Posterior vena cava (tissue), 2 donors: ENCODE measurements at regions of chr17 and their contacts with region 1.

Region 1: DNA sequence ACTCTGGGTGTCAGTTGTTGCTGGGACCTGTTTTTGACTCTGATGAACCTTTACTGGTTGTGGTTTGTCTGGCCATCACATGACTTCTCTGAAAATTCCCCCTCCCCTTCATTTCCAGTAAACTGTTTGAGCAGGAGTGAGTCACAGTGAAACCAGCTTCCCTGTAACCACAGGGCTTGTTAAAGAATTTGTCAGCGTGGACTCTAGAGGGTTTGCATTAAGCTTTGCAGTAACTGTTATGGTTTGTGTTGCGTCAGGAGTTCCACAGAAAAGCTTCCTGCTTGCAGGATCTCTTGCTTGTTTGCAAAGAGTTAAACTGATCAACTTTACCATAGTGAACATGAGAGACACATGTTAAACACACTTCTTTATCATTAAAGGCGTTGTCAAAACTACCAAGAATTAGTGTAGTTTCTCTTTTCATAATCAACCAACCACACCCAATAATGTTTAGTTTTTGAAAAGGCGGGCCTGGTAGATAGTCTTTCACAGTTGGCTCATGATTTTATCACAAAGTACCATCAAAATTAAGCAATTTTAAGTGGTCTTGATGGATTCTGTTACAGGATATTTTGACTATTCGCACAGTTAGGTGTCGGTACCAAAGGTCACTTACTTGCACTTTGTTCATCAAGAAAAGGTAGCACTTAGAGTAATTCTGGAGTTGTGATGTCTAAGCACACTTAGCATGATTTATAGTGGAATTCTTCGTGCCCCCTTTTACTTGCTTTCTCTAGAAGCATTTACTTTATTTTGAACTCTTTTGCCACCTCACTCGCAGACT is 79.3 kb downstream of the VMP1 start:
- DNase-seq: no peak

Region 2: DNA sequence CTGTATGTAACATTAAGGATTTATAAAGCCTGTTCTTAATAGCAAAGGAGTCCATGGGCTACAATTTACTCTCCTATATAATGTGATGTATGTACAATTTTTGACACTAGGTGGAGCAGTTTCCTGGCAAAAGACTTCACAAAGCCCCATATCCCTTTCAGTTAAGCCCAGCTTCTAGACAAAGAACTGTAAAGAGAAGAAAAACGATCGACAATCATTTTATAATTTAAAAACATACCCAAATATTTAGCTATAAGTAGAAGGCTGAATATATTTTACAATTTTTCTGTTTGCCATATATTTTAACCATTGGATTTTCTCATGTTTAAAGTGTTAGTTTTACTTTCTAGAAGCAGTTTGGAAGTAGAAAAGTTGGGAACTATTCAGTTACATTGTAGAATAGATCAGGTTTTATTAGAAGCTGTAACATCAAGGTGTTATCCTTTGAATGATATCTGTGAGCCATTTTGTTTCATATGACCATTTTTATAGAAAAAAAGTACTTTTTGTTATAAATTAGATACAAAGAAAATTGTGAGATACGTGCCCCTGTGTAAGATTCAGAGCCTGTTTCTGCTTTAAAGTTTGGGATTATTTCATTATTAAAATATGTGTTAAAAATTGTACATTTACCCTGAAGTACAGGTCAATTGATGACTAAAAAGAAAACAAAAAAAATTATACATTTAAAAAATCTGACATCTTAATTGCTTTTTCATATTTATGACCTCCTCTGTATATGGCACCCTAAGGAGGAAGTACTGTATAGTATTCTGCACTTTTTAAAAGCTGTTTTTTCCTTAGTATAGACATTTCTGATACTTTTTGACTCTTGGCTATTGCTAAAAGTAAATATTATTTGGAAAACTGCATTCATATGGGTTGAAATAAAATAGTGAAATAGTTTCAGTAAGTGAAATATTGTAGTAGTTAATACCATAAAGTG is 32.9 kb before region 1 on chr17:
- intact Hi-C with region 1: loop called in 1 of 2 experiments (anchors 1 kb)
- DNase-seq: no peak

Region 3: DNA sequence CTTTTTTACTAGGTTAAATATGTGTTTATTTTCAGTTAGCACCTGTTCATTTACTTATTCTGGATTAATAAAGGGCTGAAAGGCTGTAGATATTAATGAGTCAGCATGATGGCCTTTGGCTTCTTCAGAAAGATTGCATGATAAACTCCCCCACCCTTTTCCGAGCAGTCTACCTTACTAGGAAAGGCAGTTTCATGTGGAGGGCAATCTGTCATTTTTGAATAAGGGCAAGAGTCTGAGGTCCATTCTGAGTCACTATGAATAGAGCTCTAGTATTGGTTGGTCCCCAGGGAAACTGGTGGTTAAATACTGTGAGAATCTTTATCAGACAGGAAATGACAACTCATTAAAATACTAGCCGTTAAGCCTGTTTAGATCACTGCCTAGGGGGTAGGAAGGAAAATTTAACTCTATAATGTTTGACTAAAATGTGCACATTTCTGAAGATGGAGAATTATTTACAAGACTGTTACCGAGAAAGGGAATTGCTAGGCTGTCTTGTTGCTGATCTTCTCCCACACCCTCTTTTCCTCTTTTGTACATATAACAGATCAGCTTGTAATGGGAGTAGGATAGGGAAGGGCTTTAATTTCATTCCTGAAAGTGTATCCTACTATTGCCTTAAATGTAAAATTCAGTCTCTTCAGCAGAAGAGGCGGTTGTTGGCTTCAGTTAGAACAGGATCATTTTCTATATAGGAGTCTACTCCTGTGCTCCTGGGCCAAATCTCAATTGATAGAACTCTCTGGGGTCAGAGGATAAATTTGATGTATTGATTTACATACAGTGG is 42.7 kb after region 1 on chr17:
- intact Hi-C with region 1: loop called in 1 of 2 experiments (anchors 5 kb)
- DNase-seq: no peak